ENCODE measurements at regions of chr14 and their contacts with region 1.

Region 1: DNA sequence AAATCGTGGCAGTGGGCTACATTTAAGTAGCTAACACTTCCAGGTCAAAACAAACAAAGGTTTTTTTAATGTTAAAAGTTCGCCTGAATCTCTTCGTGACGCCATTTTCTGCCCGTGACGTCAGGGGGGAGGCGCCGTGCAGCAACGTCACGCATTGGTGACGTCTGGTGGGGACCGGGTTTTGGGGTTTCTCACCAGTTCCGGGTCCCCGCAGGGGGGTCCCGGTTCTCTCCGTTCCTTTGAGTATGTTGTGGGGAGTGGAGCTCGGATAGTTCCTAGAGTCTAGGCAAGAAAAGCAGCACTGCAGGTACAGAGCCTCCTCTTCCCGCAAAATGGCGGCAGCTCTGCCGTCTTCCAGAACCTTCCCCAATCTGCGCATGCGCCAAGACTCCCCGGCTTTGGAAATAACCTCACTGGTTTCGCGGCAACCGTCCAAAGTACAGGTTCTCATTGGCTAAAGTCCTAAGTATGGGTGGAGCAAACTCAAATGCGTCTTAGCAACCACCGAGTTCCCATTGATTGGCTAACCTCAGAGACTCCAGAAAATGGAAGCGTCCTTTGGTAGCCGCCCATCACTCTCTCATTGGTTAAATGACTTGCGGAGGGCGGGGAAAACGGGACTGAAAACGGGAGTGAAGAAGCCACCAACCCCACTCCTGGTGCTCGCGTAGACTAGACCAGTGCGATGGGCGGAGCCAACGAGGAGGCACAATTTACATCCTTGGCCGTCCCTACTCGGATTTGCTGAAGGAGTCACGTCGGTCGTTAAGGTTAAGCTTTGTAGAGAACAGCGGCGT is at the start of gene RBM23:
- DNase-seq: peak; percentile 97 to 100 (median 100)
- ATAC-seq: peak; percentile 88 to 89
- H3K4me3 Mint-ChIP-seq: peak within 1 kb of the TSS; percentile 90 to 100 (median 98)
- H3K27ac Mint-ChIP-seq: peak within 1 kb of the TSS; percentile 100
- H3K4me1 Mint-ChIP-seq: peaks cover 13 to 55% (median 38%) of the 10 kb centered on the region in 4 donors
- H3K27me3 Mint-ChIP-seq: peaks cover 0 to 5% (median 0%) of the 10 kb centered on the region in 5 donors
- polyA plus RNA-seq, gene RBM23: 42.2 to 62.8 (median 59.6) TPM

Region 2: DNA sequence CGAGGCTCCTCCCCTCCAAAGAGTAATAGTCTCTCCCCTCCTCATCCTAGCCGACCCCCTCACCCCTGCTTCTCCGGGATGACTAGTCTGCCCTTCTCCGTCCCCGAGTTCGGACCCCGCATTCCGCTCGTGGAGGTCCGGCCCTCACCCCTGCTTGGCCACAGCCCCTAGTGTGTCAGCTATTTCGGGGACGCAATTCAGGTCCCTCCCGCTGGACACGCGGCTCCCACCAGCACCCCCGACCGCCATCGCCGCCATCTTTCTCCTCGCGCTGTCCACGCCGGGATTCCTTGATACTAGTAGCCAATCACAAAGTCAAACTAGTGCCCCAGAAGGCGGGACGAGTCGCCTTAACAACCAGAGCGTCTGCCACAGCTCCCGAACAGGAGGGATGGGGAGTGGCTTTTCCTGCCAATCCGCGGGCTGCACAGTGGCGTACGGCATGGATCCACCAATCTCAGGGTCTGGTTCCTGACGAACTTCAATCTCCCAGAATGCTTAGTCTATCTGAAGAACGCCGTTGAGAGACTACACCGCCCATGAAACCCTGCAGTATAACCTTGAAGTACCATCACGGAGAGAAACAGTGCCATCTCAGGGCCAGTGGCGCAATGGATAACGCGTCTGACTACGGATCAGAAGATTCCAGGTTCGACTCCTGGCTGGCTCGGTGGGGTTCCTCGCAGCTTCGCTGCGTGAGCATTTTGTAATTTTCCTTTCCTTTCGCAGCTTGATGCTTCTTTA is 10.3 kb after region 1 on chr14 and contains the start of gene PRMT5:
- POLR2A ChIA-PET with region 1: interaction called, 55 read pairs
- DNase-seq: peak; percentile 89 to 99 (median 98)
- ATAC-seq: peak; percentile 96
- H3K4me3 Mint-ChIP-seq: no peak within 1 kb of the TSS
- H3K27ac Mint-ChIP-seq: no peak within 1 kb of the TSS
- H3K4me1 Mint-ChIP-seq: peaks cover 7 to 15% (median 11%) of the 10 kb centered on the region in 4 donors
- H3K27me3 Mint-ChIP-seq: no peaks in the 10 kb centered on the region
- polyA plus RNA-seq, gene PRMT5: 42.4 to 67.3 (median 62.2) TPM